Activated B cell treated with CpG ODN at 0.5 μM for 24 hours (primary cell): ENCODE measurements at regions of chr7 and their contacts with region 1.

Region 1: DNA sequence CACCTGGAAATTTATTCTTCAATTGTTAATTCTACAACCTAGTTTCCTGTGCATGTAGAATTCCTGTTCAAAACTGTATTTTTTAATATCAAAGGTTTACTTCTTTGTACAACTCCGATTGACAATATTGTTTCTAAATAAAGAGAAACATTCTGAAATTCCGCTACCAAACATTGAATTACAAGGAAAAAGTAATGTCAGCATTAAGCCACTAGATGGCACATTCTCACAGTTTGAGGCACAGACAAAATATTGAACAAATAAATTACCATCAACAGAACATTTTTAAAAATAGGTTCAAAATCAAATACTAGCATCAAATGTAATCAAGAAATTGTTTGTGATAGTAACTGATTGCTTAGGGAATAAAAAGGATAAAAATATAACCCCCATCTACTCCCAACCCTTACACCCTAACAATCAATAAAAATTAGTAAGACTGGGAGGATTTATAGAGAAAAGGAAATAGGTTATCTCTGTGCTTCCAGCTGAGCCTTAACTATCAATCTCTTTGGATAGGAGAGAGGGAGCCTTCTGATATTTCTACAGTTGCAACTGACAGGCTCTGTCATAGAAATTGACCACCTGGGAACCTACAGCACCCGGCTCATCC is 86.6 kb upstream of the C7orf33 start:
- DNase-seq: no peak
- ATAC-seq: no peak
- H3K4me3 Mint-ChIP-seq: no peak overlapping the region
- H3K27ac Mint-ChIP-seq: peak overlapping the region; percentile 50
- H3K4me1 Mint-ChIP-seq: peaks cover 76% of the 10 kb centered on the region
- H3K27me3 Mint-ChIP-seq: no peaks in the 10 kb centered on the region
- CTCF ChIP-seq: no peak

Region 2: DNA sequence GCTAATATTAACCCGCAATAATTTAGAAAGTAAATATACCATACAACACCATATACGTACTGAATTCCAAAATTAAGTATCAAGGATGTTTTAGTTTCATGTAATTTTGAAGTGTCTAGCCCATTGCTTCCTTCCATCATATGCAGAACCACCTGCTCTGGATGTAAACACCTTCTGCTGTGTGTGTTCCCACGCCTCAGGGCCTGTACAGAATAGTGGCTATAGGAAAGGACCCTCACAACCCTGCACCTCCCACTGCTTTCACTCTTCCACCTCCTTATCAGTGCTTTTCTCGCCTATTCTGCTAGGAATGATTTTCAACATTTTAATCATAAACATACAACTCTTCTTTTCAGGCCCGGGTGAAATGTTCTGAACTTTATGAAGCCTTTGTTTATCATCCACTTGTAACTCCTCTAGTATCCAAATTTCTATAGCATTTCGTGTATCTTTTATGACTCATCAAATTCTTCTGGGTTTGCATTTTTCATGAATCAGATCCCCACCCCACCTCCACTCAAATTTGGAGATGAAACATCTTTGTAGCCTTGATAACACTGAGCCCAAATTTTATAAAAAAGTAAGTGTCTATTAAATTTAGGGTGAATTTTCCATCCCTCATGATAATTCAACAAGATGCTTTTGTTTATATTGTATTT is 1020.2 kb before region 1 on chr7:
- CTCF ChIA-PET with region 1: no interaction called
- POLR2A ChIA-PET with region 1: no interaction called
- intact Hi-C with region 1: no loop called
- DNase-seq: no peak
- ATAC-seq: no peak
- H3K4me3 Mint-ChIP-seq: no peak overlapping the region
- H3K27ac Mint-ChIP-seq: no peak overlapping the region
- H3K4me1 Mint-ChIP-seq: no peaks in the 10 kb centered on the region
- H3K27me3 Mint-ChIP-seq: no peaks in the 10 kb centered on the region
- CTCF ChIP-seq: no peak

Region 3: DNA sequence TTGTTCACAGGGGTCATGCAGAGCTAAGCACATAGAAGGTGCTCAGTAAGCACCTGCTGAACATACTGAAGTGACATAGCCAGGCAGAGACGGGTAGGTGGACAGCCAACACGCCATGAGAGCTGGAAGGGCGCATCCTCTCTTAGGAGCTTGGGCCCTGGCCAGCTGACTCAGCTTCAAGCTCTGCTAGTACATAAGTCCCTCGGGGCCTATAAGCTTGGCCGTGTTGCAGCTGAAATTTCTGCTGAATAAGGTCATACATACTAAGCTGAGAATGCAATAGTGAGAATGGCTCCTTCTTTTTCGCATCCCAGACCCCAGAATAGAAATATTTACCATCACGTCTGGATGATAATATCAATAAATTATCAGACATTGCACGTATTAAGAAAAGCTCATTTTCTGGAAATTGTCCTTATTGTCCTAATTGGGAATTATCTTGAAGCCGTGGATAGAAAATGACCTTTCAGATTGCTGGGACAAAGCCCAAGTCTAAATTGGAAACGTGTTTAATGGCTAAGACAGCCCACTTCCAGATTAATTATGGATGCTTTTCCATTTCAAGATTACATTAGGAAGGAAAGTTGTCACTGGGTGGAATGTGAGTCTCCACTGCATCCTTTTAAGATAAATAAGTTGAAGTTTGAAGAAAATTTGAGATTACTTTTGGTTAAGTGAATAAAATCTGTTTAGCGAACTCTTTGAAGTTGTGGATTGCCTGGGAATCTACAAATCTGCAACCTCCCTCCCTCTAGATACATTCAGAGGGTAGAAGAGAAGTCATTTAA is 200.5 kb before region 1 on chr7:
- CTCF ChIA-PET with region 1: no interaction called
- POLR2A ChIA-PET with region 1: interaction called, 8 read pairs
- intact Hi-C with region 1: loop called (anchors 1 kb)
- DNase-seq: no peak
- ATAC-seq: peak; percentile 40
- H3K4me3 Mint-ChIP-seq: peak overlapping the region; percentile 70
- H3K27ac Mint-ChIP-seq: peak overlapping the region; percentile 93
- H3K4me1 Mint-ChIP-seq: peaks cover 73% of the 10 kb centered on the region
- H3K27me3 Mint-ChIP-seq: no peaks in the 10 kb centered on the region
- CTCF ChIP-seq: no peak

Region 4: GRCh38 chr7:148527707-148528168 is 23.8 kb after region 1 on chr7:
- CTCF ChIA-PET with region 1: interaction called, 43 read pairs
- POLR2A ChIA-PET with region 1: interaction called, 5 read pairs
- intact Hi-C with region 1: loop called (anchors 1 kb)
- DNase-seq: peak; percentile 54
- ATAC-seq: peak; percentile 94
- H3K4me3 Mint-ChIP-seq: no peak overlapping the region
- H3K27ac Mint-ChIP-seq: no peak overlapping the region
- H3K4me1 Mint-ChIP-seq: peaks cover 28% of the 10 kb centered on the region
- H3K27me3 Mint-ChIP-seq: no peaks in the 10 kb centered on the region
- CTCF ChIP-seq: peak; percentile 25

Region 5: DNA sequence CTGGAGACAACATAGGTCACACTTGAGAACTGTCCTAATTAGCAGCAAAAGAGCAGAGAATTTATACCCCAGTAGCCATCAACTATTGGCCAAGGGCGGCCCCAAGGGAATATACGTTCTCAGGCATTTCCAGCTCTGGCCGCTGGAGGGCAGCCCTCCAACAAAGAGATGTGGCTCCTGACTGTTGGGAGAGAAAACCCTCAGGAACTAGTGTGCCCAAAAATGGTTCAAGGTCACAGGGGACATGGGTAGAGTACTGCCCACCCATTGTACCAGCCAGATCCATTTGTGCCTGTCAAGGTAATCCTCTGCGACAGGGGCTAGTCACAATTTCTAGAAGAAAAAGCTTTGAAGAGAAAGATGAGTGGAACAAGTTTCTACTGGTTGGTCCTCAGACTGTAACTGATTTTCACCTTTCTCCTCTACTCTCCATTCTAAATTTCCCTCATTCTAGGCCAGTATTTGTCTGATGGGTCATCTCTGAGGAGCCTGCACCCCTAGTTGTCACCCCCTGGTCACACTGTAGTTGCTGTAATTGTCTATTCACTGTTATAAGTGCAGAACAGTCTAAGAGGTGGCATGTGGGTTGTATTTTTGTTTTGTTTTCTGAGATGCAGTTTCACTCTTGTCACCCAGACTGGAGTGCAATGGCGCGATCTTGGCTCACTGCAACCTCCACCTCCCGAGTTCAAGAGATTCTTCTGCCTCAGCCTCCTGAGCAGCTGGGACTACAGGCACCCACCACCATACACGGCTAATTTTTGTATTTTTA is 71.8 kb after region 1 on chr7:
- CTCF ChIA-PET with region 1: interaction called, 4 read pairs
- POLR2A ChIA-PET with region 1: no interaction called
- intact Hi-C with region 1: loop called (anchors 1 kb)
- DNase-seq: peak; percentile 56
- ATAC-seq: peak; percentile 88
- H3K4me3 Mint-ChIP-seq: no peak overlapping the region
- H3K27ac Mint-ChIP-seq: no peak overlapping the region
- H3K4me1 Mint-ChIP-seq: peaks cover 2% of the 10 kb centered on the region
- H3K27me3 Mint-ChIP-seq: peaks cover 2% of the 10 kb centered on the region
- CTCF ChIP-seq: no peak

Region 6: DNA sequence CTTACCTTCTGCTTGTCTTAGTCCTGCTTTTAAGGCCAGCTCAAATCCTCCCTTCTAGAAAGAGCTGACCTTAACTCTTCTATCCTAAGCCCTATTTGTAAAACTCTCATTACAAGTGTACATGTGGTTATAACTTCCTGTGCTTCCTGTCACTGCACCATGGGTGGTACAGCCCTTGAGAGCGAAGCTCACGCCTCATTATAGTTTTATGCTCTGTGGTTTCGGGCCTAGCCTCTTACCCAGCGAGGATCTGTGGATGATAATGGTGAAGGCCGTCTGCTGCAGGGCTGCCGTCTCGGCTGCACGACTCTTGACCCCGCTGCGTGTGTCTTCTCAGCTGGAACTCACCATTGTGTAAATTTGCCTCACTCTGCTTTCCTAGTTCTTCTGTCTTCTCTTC is 269.4 kb after region 1 on chr7:
- CTCF ChIA-PET with region 1: interaction called, 3 read pairs
- POLR2A ChIA-PET with region 1: no interaction called
- intact Hi-C with region 1: loop called (anchors 5 kb)
- DNase-seq: no peak
- ATAC-seq: peak; percentile 71
- H3K4me3 Mint-ChIP-seq: no peak overlapping the region
- H3K27ac Mint-ChIP-seq: peak overlapping the region; percentile 64
- H3K4me1 Mint-ChIP-seq: peaks cover 13% of the 10 kb centered on the region
- H3K27me3 Mint-ChIP-seq: no peaks in the 10 kb centered on the region
- CTCF ChIP-seq: no peak

Region 7: DNA sequence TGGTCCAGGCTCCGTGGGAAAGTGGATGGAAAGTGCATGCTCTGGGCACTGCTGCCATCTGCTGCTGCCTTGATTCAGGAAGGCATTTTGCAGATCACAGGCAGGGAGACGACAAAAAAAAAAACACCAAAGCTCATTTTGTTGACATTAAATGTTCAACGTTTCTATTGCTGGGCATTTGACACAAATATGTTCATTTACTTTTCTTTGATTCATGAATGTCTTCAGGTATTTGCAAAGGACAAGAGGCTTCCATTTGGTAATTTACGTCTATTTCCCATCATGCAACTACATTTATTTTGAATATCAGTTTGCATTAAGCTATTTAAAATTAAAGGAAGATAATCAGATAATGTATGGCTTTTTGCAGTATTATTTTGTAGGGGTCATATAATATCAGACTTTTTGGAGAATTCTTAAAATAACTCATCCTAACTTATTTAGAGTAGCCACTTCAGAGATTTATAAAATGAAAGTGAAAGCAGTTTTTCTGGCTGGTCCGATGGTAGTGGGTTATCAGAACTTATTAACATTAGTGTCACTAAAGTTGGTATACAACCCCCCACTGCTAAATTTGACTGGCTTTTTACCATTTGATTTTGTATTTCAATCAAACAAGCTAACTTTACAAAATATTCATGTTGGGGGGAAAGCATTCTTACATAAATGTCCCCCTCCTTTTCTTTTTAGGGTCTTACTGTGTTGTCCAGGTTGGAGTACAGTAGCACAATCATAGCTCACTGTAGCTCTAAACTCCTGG is 459.0 kb after region 1 on chr7:
- CTCF ChIA-PET with region 1: interaction called, 5 read pairs
- POLR2A ChIA-PET with region 1: interaction called, 11 read pairs
- intact Hi-C with region 1: loop called (anchors 1 kb)
- DNase-seq: no peak
- ATAC-seq: peak; percentile 53
- H3K4me3 Mint-ChIP-seq: peak overlapping the region; percentile 93
- H3K27ac Mint-ChIP-seq: peak overlapping the region; percentile 87
- H3K4me1 Mint-ChIP-seq: peaks cover 29% of the 10 kb centered on the region
- H3K27me3 Mint-ChIP-seq: no peaks in the 10 kb centered on the region
- CTCF ChIP-seq: no peak